ENCODE measurements at regions of chr17 and their contacts with region 1.

Region 1: GRCh38 chr17:40355123-40355803 is 9.3 kb downstream of the GJD3 start:
- DNase-seq: peak; percentile 71
- H3K4me3 Mint-ChIP-seq: no peak overlapping the region
- H3K27ac Mint-ChIP-seq: no peak overlapping the region
- H3K4me1 Mint-ChIP-seq: peaks cover 20% of the 10 kb centered on the region
- H3K27me3 Mint-ChIP-seq: no peaks in the 10 kb centered on the region

Region 2: DNA sequence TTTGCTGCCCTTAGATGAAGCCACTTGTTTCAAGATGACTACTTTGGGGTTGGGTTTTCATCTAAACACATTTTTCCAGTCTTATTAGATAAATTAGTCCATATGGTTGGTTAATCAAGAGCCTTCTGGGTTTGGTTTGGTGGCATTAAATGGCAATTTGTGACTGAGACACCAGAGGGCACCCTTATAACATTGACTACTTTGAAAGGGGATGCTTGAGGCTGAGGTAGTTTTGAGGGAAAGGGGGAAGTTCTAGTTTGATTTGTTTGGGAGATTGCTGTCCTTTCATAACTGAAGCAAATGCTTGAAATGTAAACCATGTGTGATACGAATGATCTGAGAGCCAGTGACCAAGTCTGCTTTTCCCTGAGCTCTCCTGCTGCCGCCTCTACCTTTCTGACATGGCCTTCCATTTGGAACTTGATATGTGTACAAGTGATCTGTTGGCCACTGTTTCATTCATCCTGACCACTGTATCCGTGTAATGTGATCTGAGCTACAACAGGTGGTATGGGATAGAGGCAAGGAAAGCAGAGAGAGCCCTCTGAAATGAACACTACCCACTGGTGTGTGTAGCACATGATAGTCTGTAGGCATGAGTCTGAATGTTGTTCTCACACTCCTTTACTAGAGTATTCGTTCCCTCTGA is 52.1 kb before region 1 on chr17:
- intact Hi-C with region 1: loop called (anchors 1 kb)
- DNase-seq: peak; percentile 25
- H3K4me3 Mint-ChIP-seq: no peak overlapping the region
- H3K27ac Mint-ChIP-seq: no peak overlapping the region
- H3K4me1 Mint-ChIP-seq: peaks cover 22% of the 10 kb centered on the region
- H3K27me3 Mint-ChIP-seq: no peaks in the 10 kb centered on the region

Measured in activated T-helper 1 cell treated with anti-CD3 and anti-CD28 coated beads, Interleukin-12 subunit alpha, Interleukin-12 subunit beta, Interleukin-2, Interleukin-4 antibody, amounts not matched to agents 30 ng/mL and 10 ng/mL and 1 ng/mL, durations not matched to agents 14 hours and 24 hours and 36 hours (primary cell).